GM12878 (cell line): ENCODE measurements at regions of chr16 and their contacts with region 1.

Region 1: GRCh38 chr16:47460711-47461597 is at the starts of genes ITFG1 and PHKB:
- DNase-seq: peak; percentile 69
- ATAC-seq: peak; percentile 75
- H3K4me3 ChIP-seq: peak within 1 kb of the TSS; percentile 85
- H3K27ac ChIP-seq: peak within 1 kb of the TSS; percentile 90
- H3K4me1 ChIP-seq: peaks cover 10% of the 10 kb centered on the region
- H3K27me3 ChIP-seq: no peaks in the 10 kb centered on the region
- CTCF ChIP-seq: peak in 1 of 3 experiments; percentile 22; a peak in 1 of 6 replicates
- EP300 ChIP-seq: no peak
- POLR2A ChIP-seq: peak; percentile 95
- RAD21 ChIP-seq: peak; percentile 31; the same call in 1 of the 2 replicates
- polyA plus RNA-seq, gene ITFG1: 9.3 to 15.9 TPM
- polyA plus RNA-seq, gene PHKB: 14.2 to 15.7 TPM

Region 2: GRCh38 chr16:47413041-47413440 is 47.9 kb before region 1 on chr16:
- CTCF ChIA-PET with region 1: no interaction called
- POLR2A ChIA-PET with region 1: no interaction called
- RAD21 ChIA-PET with region 1: no interaction called
- SMC1A ChIA-PET with region 1: no interaction called
- in situ Hi-C with region 1: no loop called
- intact Hi-C with region 1: no loop called
- DNase-seq: no peak
- ATAC-seq: no peak
- H3K4me3 ChIP-seq: no peak overlapping the region
- H3K27ac ChIP-seq: no peak overlapping the region
- H3K4me1 ChIP-seq: no peaks in the 10 kb centered on the region
- H3K27me3 ChIP-seq: no peaks in the 10 kb centered on the region
- CTCF ChIP-seq: no peak
- EP300 ChIP-seq: no peak
- POLR2A ChIP-seq: no peak
- RAD21 ChIP-seq: no peak

Region 3: GRCh38 chr16:47448830-47449575 is 12.0 kb before region 1 on chr16:
- CTCF ChIA-PET with region 1: interaction called, 4 read pairs
- POLR2A ChIA-PET with region 1: interaction called, 6 read pairs
- RAD21 ChIA-PET with region 1: interaction called, 5 read pairs
- SMC1A ChIA-PET with region 1: interaction called, 29 read pairs
- in situ Hi-C with region 1: no loop called
- intact Hi-C with region 1: no loop called
- DNase-seq: no peak
- ATAC-seq: no peak
- H3K4me3 ChIP-seq: no peak overlapping the region
- H3K27ac ChIP-seq: no peak overlapping the region
- H3K4me1 ChIP-seq: no peaks in the 10 kb centered on the region
- H3K27me3 ChIP-seq: no peaks in the 10 kb centered on the region
- CTCF ChIP-seq: no peak
- EP300 ChIP-seq: no peak
- POLR2A ChIP-seq: no peak
- RAD21 ChIP-seq: no peak

Region 4: DNA sequence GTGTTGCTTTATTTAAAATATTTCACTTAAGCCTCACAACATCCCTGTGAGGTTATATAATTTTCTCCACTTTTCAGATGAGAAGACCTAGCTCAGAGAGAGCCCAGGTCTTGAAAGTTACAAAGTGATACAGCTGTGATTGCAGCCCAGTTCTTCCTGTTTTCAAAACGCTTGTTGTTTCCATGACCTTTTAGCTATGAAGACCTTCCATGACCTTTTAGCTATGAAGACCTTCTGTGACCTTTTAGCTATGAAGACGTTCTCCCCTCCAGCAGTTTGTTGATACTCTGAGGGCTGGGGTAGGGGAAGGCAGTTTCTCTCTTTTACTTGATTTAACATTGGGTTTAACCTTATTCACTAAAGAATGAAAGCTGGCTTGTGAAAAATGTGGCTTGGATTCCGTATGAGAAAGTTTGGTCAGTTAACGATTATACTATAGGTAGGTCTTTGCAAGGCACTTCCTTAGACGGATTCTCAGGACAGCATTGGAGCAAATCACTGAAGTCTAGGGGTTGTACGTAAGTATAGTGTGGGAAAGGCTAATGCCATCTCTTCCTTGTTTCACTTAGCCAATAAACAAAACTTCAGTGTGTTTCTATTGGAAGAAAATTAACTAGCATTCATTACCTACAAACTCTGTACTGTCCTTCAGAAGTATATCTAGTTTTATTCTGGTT is 20.9 kb after region 1 on chr16:
- CTCF ChIA-PET with region 1: interaction called, 50 read pairs
- POLR2A ChIA-PET with region 1: interaction called, 28 read pairs
- RAD21 ChIA-PET with region 1: interaction called, 238 read pairs
- SMC1A ChIA-PET with region 1: interaction called, 254 read pairs
- in situ Hi-C with region 1: no loop called
- intact Hi-C with region 1: no loop called
- DNase-seq: no peak
- ATAC-seq: peak; percentile 27
- H3K4me3 ChIP-seq: no peak overlapping the region
- H3K27ac ChIP-seq: no peak overlapping the region; the same call in 1 of the 2 replicates
- H3K4me1 ChIP-seq: peaks cover 23% of the 10 kb centered on the region
- H3K27me3 ChIP-seq: no peaks in the 10 kb centered on the region
- CTCF ChIP-seq: no peak
- EP300 ChIP-seq: no peak
- POLR2A ChIP-seq: no peak
- RAD21 ChIP-seq: no peak

Region 5: GRCh38 chr16:47503936-47504335 is 43.0 kb after region 1 on chr16:
- CTCF ChIA-PET with region 1: no interaction called
- POLR2A ChIA-PET with region 1: no interaction called
- RAD21 ChIA-PET with region 1: interaction called, 11 read pairs
- SMC1A ChIA-PET with region 1: interaction called, 13 read pairs
- in situ Hi-C with region 1: no loop called
- intact Hi-C with region 1: no loop called
- DNase-seq: no peak
- ATAC-seq: no peak
- H3K4me3 ChIP-seq: no peak overlapping the region
- H3K27ac ChIP-seq: no peak overlapping the region
- H3K4me1 ChIP-seq: no peaks in the 10 kb centered on the region
- H3K27me3 ChIP-seq: no peaks in the 10 kb centered on the region
- CTCF ChIP-seq: no peak
- EP300 ChIP-seq: no peak
- POLR2A ChIP-seq: no peak
- RAD21 ChIP-seq: no peak

Region 6: DNA sequence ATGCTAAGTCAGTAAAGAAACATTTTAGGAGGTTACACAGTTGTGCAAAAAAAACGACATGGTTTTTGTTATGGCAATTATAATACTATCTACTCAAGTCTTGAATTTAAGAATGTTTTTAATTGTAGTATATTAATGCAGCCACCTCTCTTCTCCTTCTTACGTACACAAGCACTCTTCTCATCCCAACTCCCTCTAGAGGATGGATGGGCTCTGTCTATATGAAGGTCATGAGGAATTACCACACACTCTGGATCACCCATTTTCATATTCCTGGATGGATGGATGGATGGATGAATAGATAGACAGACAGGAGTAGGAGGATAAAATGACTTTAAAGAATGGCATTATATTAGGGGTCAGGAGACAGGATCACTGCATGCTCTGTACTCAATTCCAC is 120.2 kb after region 1 on chr16:
- CTCF ChIA-PET with region 1: interaction called, 3 read pairs
- POLR2A ChIA-PET with region 1: interaction called, 3 read pairs
- RAD21 ChIA-PET with region 1: interaction called, 3 read pairs
- SMC1A ChIA-PET with region 1: interaction called, 15 read pairs
- in situ Hi-C with region 1: no loop called
- intact Hi-C with region 1: loop called (anchors 10 kb)
- DNase-seq: no peak
- ATAC-seq: no peak
- H3K4me3 ChIP-seq: no peak overlapping the region
- H3K27ac ChIP-seq: no peak overlapping the region
- H3K4me1 ChIP-seq: no peaks in the 10 kb centered on the region
- H3K27me3 ChIP-seq: no peaks in the 10 kb centered on the region
- CTCF ChIP-seq: no peak
- EP300 ChIP-seq: no peak
- POLR2A ChIP-seq: no peak
- RAD21 ChIP-seq: no peak